ENCODE measurements at regions of chr17 and their contacts with region 1.

Region 1: GRCh38 chr17:38485146-38485468 is 56.8 kb downstream of the ARHGAP23 start:
- DNase-seq: no peak
- ATAC-seq: no peak
- H3K4me3 ChIP-seq: no peak overlapping the region
- H3K27ac ChIP-seq: no peak overlapping the region
- H3K4me1 ChIP-seq: peaks cover 0 to 8% of the 10 kb centered on the region in 2 donors
- H3K27me3 ChIP-seq: no peaks in the 10 kb centered on the region
- CTCF ChIP-seq: peak in 1 of 5 experiments; percentile 22
- POLR2A ChIP-seq: no peak

Region 2: GRCh38 chr17:38428112-38428642 is 56.9 kb before region 1 on chr17 and contains the start of gene ARHGAP23:
- in situ Hi-C with region 1: loop called in 1 of 4 experiments (anchors 10 kb)
- intact Hi-C with region 1: loop called (anchors 1 kb)
- DNase-seq: peak in 1 of 2 donors; percentile 42
- ATAC-seq: peak; percentile 54 to 55
- H3K4me3 ChIP-seq: peak within 1 kb of the TSS; percentile 78 to 99 (median 87)
- H3K27ac ChIP-seq: peak within 1 kb of the TSS; percentile 89 to 94 (median 90)
- H3K4me1 ChIP-seq: peaks cover 35 to 45% of the 10 kb centered on the region in 2 donors
- H3K27me3 ChIP-seq: no peaks in the 10 kb centered on the region
- CTCF ChIP-seq: no peak
- POLR2A ChIP-seq: peak; percentile 34
- total RNA-seq, gene ARHGAP23: 8.0 to 22.7 (median 12.1) TPM

Region 3: DNA sequence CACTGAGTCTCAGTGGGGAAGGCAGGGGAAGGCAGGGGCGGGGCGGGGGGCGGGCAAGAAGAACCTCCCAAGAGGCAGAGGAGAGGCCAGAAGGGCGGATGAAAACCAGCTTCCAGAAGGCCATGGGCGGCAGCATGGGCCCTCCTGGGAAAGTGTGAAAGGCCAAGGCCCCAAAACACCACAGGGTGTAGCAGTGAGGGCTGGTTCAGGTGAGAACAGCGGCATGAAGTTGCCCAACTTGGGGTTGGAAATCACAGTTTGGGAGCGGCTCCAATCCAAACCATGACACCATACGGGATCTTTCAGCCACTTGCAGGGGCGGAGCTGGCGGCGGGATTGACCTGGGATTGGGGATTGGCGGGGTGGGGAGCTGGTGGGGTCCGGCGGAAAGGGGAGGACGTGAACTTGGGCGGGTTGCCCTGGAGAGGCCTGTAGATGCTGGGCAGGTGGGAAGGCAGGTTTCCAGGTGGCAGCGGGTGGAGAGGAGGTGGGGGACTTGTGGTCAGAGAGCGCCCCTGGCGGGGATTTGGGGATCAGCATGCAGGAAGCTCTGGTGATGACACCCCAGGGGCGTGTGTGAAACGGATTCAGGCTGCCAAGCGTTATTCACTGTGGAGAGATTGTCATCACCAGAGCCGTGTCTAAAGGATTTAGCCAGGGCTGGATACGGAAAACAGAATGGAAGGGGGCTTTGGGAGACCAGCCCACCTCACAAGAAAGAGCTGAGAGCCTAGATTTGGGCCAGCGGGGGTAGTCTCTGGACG is 24.1 kb after region 1 on chr17:
- in situ Hi-C with region 1: no loop called
- intact Hi-C with region 1: no loop called
- DNase-seq: peak; percentile 16 to 58
- ATAC-seq: peak; percentile 37 to 66
- H3K4me3 ChIP-seq: peak overlapping the region in 1 of 4 donors; percentile 4
- H3K27ac ChIP-seq: no peak overlapping the region
- H3K4me1 ChIP-seq: no peaks in the 10 kb centered on the region
- H3K27me3 ChIP-seq: peaks cover 0 to 11% (median 0%) of the 10 kb centered on the region in 3 donors
- CTCF ChIP-seq: peak; percentile 18 to 60 (median 48)
- POLR2A ChIP-seq: no peak

Region 4: DNA sequence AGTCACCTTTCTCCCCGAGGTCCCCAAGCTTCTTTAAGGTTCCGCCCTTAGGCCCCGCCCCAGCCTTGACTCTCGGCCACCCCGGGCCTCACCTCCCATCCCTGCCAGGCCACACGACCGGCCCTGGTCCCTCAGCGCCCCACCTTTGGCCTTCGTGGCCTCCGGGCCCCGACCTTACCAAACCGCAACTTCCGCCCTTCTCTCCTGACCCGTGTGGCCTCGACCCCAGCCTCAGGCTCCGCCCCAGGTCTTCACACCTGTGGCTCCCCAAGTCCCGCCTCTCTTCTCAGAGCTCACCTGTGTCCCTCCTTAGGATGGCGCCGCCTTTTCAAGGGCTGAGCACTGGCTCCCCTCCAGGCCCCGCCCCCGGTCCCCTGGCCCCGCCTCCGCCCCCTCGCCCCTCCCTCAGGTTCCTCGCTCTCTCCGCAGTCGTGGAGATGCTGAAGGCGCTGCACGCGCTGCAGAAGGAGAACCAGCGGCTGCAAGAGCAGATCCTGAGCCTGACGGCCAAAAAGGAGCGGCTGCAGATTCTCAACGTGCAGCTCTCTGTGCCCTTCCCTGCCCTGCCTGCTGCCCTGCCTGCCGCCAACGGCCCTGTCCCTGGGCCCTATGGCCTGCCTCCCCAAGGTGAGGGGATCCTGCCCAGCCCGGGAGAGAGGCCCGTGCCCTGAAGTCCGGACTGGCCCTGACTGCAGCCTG is 235.0 kb after region 1 on chr17:
- in situ Hi-C with region 1: no loop called
- intact Hi-C with region 1: no loop called
- DNase-seq: no peak
- ATAC-seq: no peak
- H3K4me3 ChIP-seq: no peak overlapping the region
- H3K27ac ChIP-seq: no peak overlapping the region
- H3K4me1 ChIP-seq: no peaks in the 10 kb centered on the region
- H3K27me3 ChIP-seq: no peaks in the 10 kb centered on the region
- CTCF ChIP-seq: no peak
- POLR2A ChIP-seq: no peak

Region 5: GRCh38 chr17:39014044-39014794 is 529.1 kb after region 1 on chr17:
- in situ Hi-C with region 1: no loop called
- intact Hi-C with region 1: no loop called
- DNase-seq: no peak
- ATAC-seq: no peak
- H3K4me3 ChIP-seq: no peak overlapping the region
- H3K27ac ChIP-seq: peak overlapping the region in 3 of 4 donors; percentile 14 to 54 (median 29)
- H3K4me1 ChIP-seq: no peaks in the 10 kb centered on the region
- H3K27me3 ChIP-seq: no peaks in the 10 kb centered on the region
- CTCF ChIP-seq: no peak
- POLR2A ChIP-seq: no peak

Measured in gastrocnemius medialis (tissue), 4 donors.